Posterior vena cava (tissue), 2 donors: ENCODE measurements at regions of chr20 and their contacts with region 1.

Region 1: GRCh38 chr20:41272339-41272738 is 45.2 kb downstream of the ZHX3 start:
- DNase-seq: no peak

Region 2: GRCh38 chr20:41198443-41198842 is 73.9 kb before region 1 on chr20:
- intact Hi-C with region 1: loop called in 1 of 2 experiments (anchors 2 kb)
- DNase-seq: no peak